ENCODE measurements at regions of chr1 and their contacts with region 1.

Region 1: GRCh38 chr1:84944767-84945486 is 51.9 kb upstream of the LPAR3 start:
- DNase-seq: peak; percentile 46 to 91 (median 85)
- H3K4me3 ChIP-seq: peak overlapping the region; percentile 67
- H3K4me3 Mint-ChIP-seq: peak overlapping the region; percentile 84 to 92 (median 87)
- H3K27ac ChIP-seq: peak overlapping the region; percentile 67
- H3K27ac Mint-ChIP-seq: peak overlapping the region; percentile 93 to 97 (median 97)
- H3K4me1 ChIP-seq: no peaks in the 10 kb centered on the region
- H3K4me1 Mint-ChIP-seq: peaks cover 12 to 25% (median 19%) of the 10 kb centered on the region in 3 donors
- H3K27me3 ChIP-seq: no peaks in the 10 kb centered on the region
- H3K27me3 Mint-ChIP-seq: peaks cover 0 to 2% of the 10 kb centered on the region in 2 donors

Region 2: DNA sequence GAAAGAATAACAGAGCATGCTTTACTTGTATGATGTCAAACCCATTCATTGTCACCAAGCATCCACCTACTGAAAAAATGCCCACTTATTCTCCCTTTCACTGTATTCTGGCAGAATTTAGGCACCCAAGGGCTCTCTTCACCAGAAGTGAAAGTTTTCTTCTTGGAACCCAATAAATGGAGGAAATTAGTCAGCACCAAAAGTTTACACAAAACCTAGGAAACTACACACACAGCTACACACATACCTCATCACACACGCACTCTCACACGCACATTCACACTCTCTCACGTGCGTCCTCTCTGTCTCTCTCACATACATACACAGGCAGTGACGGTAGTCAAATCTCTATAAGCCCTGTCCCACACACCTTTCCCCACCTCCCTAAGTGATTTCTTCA is 14.4 kb after region 1 on chr1:
- CTCF ChIA-PET with region 1: interaction called, 22 read pairs
- POLR2A ChIA-PET with region 1: no interaction called
- DNase-seq: peak in 1 of 5 donors; percentile 21
- H3K4me3 ChIP-seq: no peak overlapping the region
- H3K4me3 Mint-ChIP-seq: no peak overlapping the region
- H3K27ac ChIP-seq: no peak overlapping the region
- H3K27ac Mint-ChIP-seq: peak overlapping the region in 6 of 8 donors; percentile 1 to 82 (median 32)
- H3K4me1 ChIP-seq: no peaks in the 10 kb centered on the region
- H3K4me1 Mint-ChIP-seq: peaks cover 5 to 22% (median 10%) of the 10 kb centered on the region in 3 donors
- H3K27me3 ChIP-seq: no peaks in the 10 kb centered on the region
- H3K27me3 Mint-ChIP-seq: no peaks in the 10 kb centered on the region

Region 3: DNA sequence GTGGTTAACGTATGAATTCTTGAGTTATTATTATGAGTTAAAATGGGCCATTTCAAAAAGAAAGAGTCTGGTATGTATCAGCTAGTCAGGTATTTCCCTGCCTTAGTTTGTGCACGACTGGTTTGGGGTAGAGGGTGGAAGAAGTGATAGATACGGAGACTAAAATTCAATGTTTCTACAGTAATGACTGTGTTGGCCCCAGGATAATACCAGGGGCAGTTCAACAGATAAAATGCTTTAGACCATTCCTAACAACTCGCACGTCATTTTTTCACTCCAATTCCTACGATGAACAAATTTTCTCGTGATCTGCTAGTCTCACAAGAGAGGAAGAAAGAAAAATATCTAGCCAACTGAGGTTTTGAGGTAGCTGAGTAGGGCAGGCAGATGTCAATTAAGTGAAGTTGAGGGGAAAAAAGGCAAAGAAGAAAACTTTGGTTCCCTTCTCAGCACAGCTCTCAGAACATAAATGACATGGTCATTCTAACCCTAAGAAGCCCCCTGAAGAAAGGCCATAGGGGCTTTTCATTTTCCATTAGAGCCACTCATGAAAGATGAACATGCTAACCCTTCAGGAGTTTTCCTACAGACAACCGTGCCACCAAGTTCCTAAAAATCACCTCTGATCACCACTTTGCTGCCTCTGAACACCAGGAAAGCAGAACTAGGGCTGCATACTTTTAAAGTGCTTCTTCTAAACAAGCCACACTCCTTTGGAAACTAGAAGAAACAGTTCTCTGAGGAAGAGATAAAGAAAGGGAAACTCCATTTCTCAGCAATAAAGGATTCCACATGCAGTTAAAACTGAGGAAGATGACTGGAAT is 46.4 kb after region 1 on chr1:
- CTCF ChIA-PET with region 1: interaction called, 34 read pairs
- POLR2A ChIA-PET with region 1: interaction called, 9 read pairs
- DNase-seq: no peak
- H3K4me3 ChIP-seq: no peak overlapping the region
- H3K4me3 Mint-ChIP-seq: peak overlapping the region; percentile 24 to 76 (median 44)
- H3K27ac ChIP-seq: no peak overlapping the region
- H3K27ac Mint-ChIP-seq: peak overlapping the region; percentile 1 to 86 (median 42)
- H3K4me1 ChIP-seq: peaks cover 10% of the 10 kb centered on the region
- H3K4me1 Mint-ChIP-seq: peaks cover 55 to 75% (median 69%) of the 10 kb centered on the region in 3 donors
- H3K27me3 ChIP-seq: no peaks in the 10 kb centered on the region
- H3K27me3 Mint-ChIP-seq: no peaks in the 10 kb centered on the region

Region 4: DNA sequence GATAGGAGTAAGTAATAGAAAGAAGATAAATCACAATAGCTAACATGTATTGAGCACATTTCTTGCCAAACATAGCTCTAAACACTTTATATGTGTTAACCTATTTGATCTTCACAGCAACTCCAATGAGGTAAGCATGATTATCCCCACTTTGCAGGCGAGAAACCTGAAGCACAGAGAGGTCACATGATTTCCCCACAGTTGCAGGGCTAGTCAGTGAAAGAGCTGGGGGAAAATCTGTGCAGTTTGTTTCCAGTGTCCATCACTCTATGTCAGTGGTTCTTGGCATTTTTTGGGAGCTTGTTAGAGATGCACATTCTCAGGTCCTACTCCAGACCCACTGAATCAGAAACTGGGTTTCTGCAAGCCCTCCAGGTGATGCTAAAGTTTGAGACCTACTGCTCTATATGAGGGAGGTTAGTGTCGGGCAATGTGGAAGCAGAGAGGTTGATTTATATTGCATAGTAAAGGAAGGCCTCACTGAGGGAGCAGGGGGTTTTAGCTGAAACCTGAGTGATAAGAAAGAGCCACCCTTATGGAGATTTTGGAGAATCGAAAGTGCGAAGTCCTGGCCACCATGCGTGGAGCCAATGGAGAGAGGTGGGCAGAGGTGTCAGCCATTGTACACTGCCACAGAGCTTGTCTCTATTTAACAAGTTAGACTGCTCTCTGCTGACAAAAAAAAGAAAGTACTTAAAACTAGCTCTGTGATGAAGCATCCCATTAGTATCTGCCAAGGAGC is 82.5 kb after region 1 on chr1:
- CTCF ChIA-PET with region 1: interaction called, 256 read pairs
- POLR2A ChIA-PET with region 1: interaction called, 37 read pairs
- DNase-seq: peak in 4 of 5 donors; percentile 28 to 69 (median 52)
- H3K4me3 ChIP-seq: peak overlapping the region; percentile 13
- H3K4me3 Mint-ChIP-seq: peak overlapping the region; percentile 67 to 93 (median 88)
- H3K27ac ChIP-seq: peak overlapping the region; percentile 34
- H3K27ac Mint-ChIP-seq: peak overlapping the region; percentile 55 to 96 (median 93)
- H3K4me1 ChIP-seq: peaks cover 8% of the 10 kb centered on the region
- H3K4me1 Mint-ChIP-seq: peaks cover 10 to 18% (median 14%) of the 10 kb centered on the region in 3 donors
- H3K27me3 ChIP-seq: no peaks in the 10 kb centered on the region
- H3K27me3 Mint-ChIP-seq: no peaks in the 10 kb centered on the region

Region 5: DNA sequence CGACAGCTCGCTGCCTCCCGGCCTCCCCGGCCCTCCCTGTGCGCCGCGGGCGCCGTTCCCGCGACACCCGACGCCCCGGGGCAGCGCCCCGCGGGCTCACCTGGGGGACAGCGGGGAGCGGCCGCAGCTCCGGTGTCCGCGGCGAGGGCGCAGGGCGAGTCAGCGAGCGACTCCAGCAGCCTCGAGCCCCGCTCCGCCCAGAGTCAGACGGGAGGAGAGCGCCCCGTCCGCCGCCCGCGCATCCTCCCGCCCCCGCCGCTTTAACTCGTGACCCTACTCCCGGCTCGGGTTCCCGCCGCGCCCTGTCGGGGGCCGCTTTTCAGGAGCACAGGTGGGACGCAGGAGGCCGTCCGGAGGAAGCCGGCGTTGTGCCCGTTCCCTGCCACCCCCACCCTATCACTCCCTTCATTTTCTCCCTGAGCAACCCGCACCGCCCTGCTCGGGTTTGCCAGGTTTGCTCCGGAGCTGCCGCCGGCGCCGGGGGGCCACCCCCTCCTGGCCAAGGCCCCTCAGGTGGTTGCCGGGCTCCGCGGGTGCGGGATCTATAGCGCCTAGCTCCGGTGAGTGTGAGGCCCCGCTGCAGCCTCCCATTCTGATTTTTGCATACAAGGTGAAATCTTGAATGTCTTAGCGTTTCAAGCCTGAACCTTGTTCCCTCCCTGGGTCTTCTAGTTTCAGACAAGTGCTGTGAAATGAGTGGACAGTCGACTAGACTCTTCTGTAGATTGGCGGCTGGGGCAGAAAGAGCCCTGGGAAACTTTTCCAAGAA is 103.6 kb after region 1 on chr1 and contains the start of gene MCOLN3:
- CTCF ChIA-PET with region 1: interaction called, 18 read pairs
- POLR2A ChIA-PET with region 1: no interaction called
- DNase-seq: peak in 4 of 5 donors; percentile 22 to 50 (median 28)
- H3K4me3 ChIP-seq: peak within 1 kb of the TSS; percentile 26
- H3K4me3 Mint-ChIP-seq: peak within 1 kb of the TSS; percentile 66 to 93 (median 81)
- H3K27ac ChIP-seq: no peak within 1 kb of the TSS
- H3K27ac Mint-ChIP-seq: peak within 1 kb of the TSS in 2 of 8 donors; percentile 24 to 52
- H3K4me1 ChIP-seq: peaks cover 32% of the 10 kb centered on the region
- H3K4me1 Mint-ChIP-seq: peaks cover 19 to 38% (median 34%) of the 10 kb centered on the region in 3 donors
- H3K27me3 ChIP-seq: peaks cover 21% of the 10 kb centered on the region
- H3K27me3 Mint-ChIP-seq: peaks cover 26 to 52% of the 10 kb centered on the region in 2 donors
- total RNA-seq, gene MCOLN3: 0.47 to 0.50 TPM

Region 6: DNA sequence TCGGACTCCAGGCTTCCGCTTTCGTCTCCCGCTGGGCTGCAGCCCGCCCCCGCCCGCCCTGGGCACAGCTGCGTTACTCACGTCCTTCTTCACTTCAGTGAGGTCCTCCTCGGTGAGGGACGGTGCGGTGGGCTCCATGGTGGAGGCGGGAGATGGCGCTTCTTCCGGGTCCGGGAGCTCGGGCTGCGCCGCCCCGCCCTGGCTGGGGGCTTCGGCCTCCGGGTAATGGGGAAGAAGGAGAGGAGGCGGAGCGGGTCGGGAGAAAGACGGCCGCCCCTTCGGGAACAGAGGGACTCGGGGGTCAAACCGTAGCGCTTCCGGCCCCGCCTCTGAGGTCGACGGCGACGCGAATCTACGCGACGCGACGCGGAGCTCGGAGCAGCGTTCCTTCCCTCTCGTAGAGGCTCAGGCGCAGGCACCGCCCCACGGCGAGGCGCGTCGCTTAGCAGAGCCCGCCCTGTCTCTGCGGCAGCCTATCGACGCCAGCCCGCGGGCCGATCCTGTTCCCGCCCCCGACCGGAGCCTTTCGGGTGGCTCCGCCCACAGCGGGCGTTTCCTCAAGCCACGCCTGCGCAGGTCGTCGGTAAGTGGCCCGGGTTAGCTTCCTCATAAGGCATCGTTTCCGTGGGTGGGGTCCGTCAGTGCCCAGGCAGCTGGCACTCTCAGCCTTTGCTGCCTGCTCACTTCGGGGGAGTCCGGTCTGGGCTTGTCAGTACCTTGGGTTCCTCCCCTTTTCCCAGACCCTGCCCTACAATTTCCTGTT is 331.5 kb after region 1 on chr1 and contains the start of gene BCL10:
- CTCF ChIA-PET with region 1: interaction called, 12 read pairs
- POLR2A ChIA-PET with region 1: interaction called, 10 read pairs
- DNase-seq: peak; percentile 97 to 98 (median 98)
- H3K4me3 ChIP-seq: peak within 1 kb of the TSS; percentile 89
- H3K4me3 Mint-ChIP-seq: peak within 1 kb of the TSS; percentile 87 to 95 (median 90)
- H3K27ac ChIP-seq: peak within 1 kb of the TSS; percentile 88
- H3K27ac Mint-ChIP-seq: peak within 1 kb of the TSS; percentile 89 to 98 (median 94)
- H3K4me1 ChIP-seq: peaks cover 33% of the 10 kb centered on the region
- H3K4me1 Mint-ChIP-seq: peaks cover 50 to 56% (median 53%) of the 10 kb centered on the region in 3 donors
- H3K27me3 ChIP-seq: no peaks in the 10 kb centered on the region
- H3K27me3 Mint-ChIP-seq: peaks cover 3 to 4% of the 10 kb centered on the region in 2 donors
- total RNA-seq, gene BCL10: 21.9 to 27.1 TPM